Activated CD4-positive, alpha-beta T cell treated with anti-CD3 and anti-CD28 coated beads, Interleukin-2, amount 10 ng/mL, durations not matched to agents 24 days and 14 days (primary cell): ENCODE measurements at regions of chr1 and their contacts with region 1.

Region 1: DNA sequence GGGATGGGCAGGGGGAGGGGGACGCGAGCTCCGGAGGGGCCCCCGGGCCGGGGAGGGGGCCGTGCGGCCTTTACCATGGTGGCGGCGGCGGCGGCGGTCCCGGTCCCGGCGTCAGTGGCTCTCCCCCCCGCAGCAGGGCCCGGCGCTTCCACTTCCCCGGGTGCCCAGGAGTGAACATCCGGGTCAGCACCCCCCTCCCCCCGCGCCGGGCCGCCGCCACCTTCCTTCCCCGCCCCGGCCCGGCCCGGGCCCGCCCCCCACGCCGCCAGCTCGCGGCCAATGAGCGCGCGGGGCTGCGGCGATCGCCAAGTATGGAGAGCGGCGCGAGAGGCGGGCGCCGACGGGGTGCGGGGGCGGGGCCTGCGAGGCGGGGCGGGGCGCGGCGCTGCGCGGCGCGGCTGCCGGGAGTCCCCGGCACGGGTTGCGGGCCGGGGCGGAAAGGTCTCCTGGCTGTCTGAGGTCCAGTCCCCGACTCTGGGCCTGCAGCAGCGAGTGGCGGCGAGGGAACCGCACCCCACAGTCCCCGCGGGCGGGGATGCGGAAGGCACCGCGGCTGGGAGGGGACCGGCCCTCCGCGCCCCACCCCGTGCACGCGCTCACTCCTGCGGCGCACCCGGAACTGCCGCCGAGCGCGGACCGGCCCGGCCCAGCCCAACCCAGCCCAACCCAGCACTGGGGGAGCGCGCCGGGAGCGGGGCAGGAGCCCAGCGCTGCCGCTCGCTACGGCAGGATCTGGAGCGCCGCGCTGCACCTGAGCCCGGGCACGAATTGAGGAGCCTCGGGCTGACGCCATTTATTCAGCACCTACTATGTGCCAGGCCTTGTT is at the start of gene CAPZB:
- DNase-seq: peak; percentile 97
- H3K4me3 Mint-ChIP-seq: peak within 1 kb of the TSS; percentile 97
- H3K27ac Mint-ChIP-seq: peak within 1 kb of the TSS; percentile 95
- H3K4me1 Mint-ChIP-seq: peaks cover 52% of the 10 kb centered on the region
- H3K27me3 Mint-ChIP-seq: no peaks in the 10 kb centered on the region
- total RNA-seq, gene CAPZB: 291 and 297 TPM in 2 replicates

Region 2: GRCh38 chr1:19311959-19312781 is 173.4 kb before region 1 on chr1 and contains the starts of genes AKR7A2 and SLC66A1:
- intact Hi-C with region 1: loop called (anchors 1 kb)
- DNase-seq: peak; percentile 99
- H3K4me3 Mint-ChIP-seq: peak within 1 kb of the TSS; percentile 92
- H3K27ac Mint-ChIP-seq: peak within 1 kb of the TSS; percentile 89
- H3K4me1 Mint-ChIP-seq: peaks cover 35% of the 10 kb centered on the region
- H3K27me3 Mint-ChIP-seq: no peaks in the 10 kb centered on the region
- total RNA-seq, gene AKR7A2: 33.6 and 35.4 TPM in 2 replicates
- total RNA-seq, gene SLC66A1: 9.2 and 10.1 TPM in 2 replicates

Region 3: DNA sequence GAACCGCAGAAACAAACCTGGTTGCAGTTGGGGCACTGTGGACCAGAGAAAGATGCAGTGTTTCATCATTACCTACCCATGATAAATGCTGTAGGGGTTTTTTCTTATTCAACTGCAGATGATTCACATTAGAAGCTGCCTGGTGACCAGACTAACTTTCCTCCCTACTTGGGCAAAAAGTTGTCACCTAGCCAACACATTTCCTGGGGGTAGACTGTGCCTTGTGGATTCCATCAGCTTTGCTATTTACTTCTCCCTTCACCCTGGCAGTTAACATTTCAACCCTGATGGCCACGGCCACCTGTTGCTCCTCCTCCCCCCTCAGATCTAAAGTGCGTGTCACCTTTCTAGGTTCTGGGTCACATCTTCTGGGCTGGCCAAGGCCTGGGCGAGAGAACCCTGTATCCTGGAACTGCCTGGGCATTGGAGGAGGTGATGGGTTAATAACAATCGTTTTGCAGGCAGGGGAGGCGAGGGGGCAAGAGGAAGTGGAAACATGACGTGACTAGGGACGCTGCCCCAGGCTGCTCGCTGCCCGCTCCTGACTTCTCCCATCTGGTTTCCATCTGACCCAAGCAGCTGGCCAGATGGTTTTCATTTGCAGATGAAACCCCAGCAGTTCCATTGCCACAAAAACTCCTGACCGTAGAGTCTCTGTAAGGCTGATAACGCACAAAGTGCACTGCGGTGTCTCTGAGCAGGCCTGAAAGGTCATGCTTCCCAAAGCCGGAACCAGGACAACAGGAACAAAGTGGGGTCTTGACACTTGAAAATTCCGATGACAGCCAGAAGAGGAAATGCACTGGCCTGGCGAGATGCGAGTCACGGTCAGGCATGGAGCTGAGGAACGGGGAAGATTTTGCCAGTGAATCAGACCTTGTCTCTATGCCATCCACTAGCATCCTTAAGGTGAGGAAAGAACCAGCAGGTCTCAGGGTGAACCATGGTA is 36.8 kb before region 1 on chr1:
- intact Hi-C with region 1: loop called (anchors 1 kb)
- DNase-seq: no peak
- H3K4me3 Mint-ChIP-seq: peak overlapping the region; percentile 58
- H3K27ac Mint-ChIP-seq: peak overlapping the region; percentile 90
- H3K4me1 Mint-ChIP-seq: peaks cover 68% of the 10 kb centered on the region
- H3K27me3 Mint-ChIP-seq: no peaks in the 10 kb centered on the region

Region 4: GRCh38 chr1:19582302-19582701 is 96.7 kb after region 1 on chr1:
- intact Hi-C with region 1: loop called (anchors 5 kb)
- DNase-seq: peak; percentile 92
- H3K4me3 Mint-ChIP-seq: no peak overlapping the region
- H3K27ac Mint-ChIP-seq: no peak overlapping the region
- H3K4me1 Mint-ChIP-seq: peaks cover 5% of the 10 kb centered on the region
- H3K27me3 Mint-ChIP-seq: peaks cover 2% of the 10 kb centered on the region

Region 5: DNA sequence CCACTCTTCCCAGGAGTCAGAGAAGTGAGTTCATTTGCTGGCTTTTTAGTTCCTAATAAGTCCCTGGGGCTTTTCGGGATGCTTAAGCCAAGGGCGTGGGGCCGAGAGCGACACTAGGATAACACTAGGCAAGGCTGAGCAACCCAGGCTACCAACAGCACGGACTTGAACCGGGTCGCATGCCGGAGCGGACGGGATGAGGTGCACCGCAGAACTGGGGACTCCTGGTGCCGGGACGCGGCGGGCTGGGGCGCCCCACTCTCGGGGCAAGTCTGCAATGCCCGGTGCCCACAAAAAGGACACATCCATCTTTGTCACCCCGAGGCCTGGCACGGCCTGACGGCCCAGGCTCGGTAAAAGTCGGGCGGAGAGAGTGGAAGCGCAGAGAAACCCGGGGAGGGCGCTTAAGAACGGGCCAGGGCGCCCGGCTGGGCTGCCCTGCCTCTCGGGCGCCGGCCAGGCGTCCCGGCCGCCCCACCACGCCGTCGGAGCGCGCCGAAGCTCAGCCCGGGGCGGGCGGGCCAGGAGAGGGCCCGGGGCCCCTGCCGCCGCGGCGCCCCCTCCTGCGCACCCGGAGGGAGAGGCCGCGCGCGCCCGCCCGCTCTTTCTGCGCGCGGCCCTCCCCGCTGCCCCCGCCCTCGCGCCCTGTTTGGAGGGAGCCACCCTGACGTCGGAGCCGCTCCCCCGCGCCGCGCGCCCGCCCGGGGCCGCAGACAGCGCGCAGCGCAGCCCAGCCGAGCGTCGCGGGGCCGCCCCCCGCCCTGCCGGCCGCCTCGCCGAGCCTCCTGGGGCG is 158.2 kb after region 1 on chr1 and contains the start of gene NBL1:
- intact Hi-C with region 1: loop called (anchors 2 kb)
- DNase-seq: peak; percentile 94
- H3K4me3 Mint-ChIP-seq: peak within 1 kb of the TSS; percentile 98
- H3K27ac Mint-ChIP-seq: peak within 1 kb of the TSS; percentile 88
- H3K4me1 Mint-ChIP-seq: peaks cover 28% of the 10 kb centered on the region
- H3K27me3 Mint-ChIP-seq: peaks cover 19% of the 10 kb centered on the region
- total RNA-seq, gene NBL1: 51.7 and 54.1 TPM in 2 replicates